ENCODE measurements at regions of chr9 and their contacts with region 1.

Region 1: DNA sequence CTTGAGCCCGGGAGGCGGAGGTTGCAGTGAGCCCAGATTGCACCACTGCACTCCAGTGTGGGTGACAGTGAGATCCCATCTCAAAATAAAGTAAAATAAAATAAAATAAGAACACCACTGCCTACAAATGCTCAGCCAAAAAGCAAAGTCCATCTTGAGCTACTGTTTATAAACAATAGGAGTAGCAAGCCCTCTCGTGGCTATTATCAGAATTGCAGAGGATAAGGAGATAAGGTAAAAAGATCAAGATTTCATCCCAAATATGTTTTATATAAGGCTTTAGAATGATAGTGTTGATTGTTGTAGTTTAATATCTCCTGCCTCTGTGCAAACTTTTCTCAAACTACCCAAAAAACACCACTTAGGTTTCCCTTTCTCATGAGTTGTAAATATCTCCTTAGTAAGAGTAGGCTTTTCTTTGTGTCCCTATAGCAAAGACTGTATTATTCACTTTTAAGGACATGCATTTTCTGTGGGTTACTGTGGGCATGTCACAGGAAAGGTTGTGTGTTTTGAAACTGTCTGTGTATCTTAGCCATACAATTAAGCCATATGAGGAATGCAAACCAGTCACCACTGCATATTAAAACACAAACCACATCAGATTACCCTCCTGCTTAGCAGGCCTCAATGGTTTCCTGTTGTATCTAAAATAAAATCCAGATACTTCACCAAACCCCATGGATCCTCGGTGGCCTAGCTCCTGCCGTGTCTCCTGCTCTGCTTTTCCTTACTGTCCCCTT is 31.8 kb upstream of the CKS2 start:
- DNase-seq: peak; percentile 75
- H3K4me3 Mint-ChIP-seq: no peak overlapping the region
- H3K27ac Mint-ChIP-seq: no peak overlapping the region
- H3K4me1 Mint-ChIP-seq: peaks cover 21% of the 10 kb centered on the region
- H3K27me3 Mint-ChIP-seq: peaks cover 7% of the 10 kb centered on the region

Region 2: DNA sequence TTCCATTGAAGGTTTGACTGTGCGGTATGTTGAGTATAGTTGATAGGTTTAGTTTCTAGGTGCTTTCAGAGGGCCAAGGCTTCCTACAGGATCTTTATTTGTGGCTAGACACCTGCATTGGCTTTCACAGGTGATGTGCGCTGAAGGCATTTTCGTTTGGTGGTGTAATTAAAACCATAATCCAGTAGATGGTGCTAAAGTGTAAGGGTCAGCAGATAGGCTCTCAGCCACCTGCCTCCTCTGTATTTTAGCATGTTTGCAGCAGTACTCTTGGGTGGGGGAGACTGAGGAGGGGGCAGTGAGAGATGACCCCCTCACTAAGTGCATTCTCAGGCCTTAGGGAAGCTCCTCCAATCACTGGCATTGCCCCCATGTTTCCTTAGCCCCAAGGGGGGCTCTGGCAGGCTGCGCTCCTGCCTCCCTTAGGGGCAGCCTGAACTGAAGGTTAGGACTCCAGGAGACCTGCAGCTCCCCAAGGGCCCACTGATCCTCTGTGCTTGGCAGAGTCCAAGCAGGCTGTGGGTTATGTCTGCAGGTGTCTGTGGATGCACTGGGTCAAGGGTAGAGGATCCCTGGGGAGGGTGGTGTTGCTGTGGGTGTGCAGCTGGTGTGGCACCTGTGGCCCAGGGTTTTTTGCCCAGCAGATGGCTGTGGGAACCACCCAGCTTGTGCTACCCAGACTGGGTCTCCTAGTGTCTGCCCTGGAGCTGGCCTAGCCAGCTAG is 1328.2 kb before region 1 on chr9:
- intact Hi-C with region 1: loop called (anchors 5 kb)
- DNase-seq: peak; percentile 68
- H3K4me3 Mint-ChIP-seq: no peak overlapping the region
- H3K27ac Mint-ChIP-seq: no peak overlapping the region
- H3K4me1 Mint-ChIP-seq: peaks cover 2% of the 10 kb centered on the region
- H3K27me3 Mint-ChIP-seq: peaks cover 25% of the 10 kb centered on the region

Region 3: DNA sequence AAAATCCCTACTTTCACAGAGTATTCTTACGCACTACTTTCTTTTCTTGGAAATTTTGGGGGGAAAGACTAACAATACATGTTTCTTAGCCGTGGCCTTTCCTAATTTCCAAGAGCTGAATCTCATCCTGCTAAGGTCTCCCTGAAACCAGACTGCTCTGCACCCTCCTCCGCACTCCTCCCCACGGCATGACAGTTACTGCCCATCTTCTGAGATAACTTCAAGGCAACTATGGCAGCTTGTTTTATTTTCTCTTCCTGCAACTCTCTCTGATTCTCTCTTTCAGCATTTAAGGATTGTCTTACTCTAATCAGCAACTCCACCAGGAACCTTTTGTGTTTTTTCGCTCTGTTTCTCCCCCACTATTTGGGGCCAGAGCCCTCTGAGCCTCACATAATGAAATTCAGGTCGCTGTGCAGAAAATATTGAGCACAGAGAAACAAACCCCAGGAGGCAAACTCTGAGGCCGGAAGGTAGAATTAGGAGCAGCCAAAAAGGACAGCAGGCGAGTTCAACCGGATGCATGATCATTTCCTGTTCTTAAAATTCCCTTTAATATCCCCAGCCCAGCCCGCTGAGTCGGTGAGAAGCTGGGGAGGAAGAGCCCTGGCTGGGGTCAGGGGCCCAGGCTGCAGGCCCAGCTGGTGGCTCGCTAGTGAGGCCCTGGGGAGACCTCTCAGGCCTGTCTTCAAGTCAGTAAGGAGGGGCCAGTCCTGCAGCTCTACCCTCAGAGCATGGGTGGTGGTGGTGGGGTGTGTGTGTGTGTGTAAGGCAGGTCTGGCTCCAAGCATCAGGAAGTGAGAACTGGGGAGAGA is 501.5 kb before region 1 on chr9:
- intact Hi-C with region 1: no loop called
- DNase-seq: peak; percentile 51
- H3K4me3 Mint-ChIP-seq: no peak overlapping the region
- H3K27ac Mint-ChIP-seq: no peak overlapping the region
- H3K4me1 Mint-ChIP-seq: no peaks in the 10 kb centered on the region
- H3K27me3 Mint-ChIP-seq: peaks cover 4% of the 10 kb centered on the region

Region 4: DNA sequence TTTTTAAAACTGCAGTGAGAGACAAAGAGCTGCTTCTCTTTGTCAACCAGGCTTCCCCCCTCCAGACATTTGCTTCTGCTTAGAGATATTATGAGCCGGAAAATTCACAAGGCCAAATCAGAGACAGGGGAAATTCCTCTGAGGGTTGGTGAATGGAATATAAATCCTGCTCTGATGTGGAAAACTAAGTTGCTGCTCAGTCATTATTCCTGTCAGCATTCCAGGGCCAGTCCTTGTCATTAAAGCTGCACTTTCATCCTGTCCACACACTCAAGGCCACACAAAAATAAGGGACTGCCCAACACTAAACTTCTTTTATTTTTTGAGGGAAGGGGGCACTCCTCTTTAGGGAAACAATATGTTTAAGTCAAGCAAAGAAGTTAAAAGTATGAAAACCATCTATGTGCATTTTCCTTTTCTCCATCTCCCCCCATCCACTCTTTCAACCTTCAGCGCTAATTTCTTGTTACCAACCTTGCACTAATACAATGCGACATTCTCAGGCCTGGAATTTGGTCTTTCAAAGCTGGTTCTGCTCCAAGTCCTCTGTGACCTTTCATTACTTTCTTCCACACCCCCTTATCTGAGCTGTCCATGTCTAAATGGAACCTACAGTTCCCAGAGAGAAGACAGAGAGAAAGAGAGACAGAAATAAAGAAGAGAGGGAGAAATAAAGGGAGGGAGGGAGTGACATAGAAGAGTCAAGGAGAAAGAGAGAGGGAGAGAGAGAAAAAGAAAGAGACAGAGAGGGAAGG is 406.8 kb before region 1 on chr9:
- intact Hi-C with region 1: no loop called
- DNase-seq: no peak
- H3K4me3 Mint-ChIP-seq: no peak overlapping the region
- H3K27ac Mint-ChIP-seq: no peak overlapping the region
- H3K4me1 Mint-ChIP-seq: no peaks in the 10 kb centered on the region
- H3K27me3 Mint-ChIP-seq: peaks cover 13% of the 10 kb centered on the region

Region 5: GRCh38 chr9:88905506-88905905 is 373.7 kb before region 1 on chr9:
- intact Hi-C with region 1: no loop called
- DNase-seq: no peak
- H3K4me3 Mint-ChIP-seq: no peak overlapping the region
- H3K27ac Mint-ChIP-seq: no peak overlapping the region
- H3K4me1 Mint-ChIP-seq: no peaks in the 10 kb centered on the region
- H3K27me3 Mint-ChIP-seq: peaks cover 19% of the 10 kb centered on the region

Region 6: DNA sequence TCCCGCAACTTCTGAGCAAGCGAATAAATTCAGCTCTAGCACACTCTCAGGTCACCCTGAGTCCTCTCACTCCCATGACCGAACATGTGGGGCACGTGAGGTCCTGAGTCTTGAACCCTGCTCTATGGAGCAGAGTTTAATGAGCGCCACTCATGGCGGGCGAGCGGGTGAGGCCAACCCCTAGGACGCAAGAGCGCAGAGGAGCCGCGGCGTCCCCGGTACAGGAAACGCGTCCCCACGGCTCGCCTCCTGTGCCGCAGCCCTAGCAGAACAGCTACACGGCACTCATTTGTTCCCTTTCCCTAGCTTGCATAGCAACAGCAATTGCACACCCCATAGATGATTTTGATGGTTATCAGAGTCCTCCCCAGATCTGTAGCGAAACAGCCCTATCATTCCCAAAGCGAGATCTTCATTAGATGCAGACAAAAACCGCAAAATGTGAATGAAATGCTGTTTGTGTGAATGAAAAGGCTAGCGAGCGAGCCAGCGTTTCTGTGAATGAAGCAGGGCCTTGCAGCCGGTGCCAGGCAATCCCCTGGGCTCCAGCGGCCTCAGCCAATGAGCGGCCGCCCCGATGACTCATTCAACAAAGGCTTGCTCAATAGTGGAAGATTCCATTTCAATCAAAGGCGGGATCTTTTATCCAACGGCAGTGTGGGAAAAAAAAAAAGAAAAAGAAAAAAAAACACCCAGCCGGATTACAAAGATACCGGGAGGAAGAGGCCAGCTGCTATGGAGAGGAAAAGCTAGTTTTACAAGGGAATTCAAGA is 99.1 kb before region 1 on chr9:
- intact Hi-C with region 1: loop called (anchors 2 kb)
- DNase-seq: peak; percentile 77
- H3K4me3 Mint-ChIP-seq: peak overlapping the region; percentile 60
- H3K27ac Mint-ChIP-seq: no peak overlapping the region
- H3K4me1 Mint-ChIP-seq: peaks cover 12% of the 10 kb centered on the region
- H3K27me3 Mint-ChIP-seq: peaks cover 57% of the 10 kb centered on the region

Region 7: DNA sequence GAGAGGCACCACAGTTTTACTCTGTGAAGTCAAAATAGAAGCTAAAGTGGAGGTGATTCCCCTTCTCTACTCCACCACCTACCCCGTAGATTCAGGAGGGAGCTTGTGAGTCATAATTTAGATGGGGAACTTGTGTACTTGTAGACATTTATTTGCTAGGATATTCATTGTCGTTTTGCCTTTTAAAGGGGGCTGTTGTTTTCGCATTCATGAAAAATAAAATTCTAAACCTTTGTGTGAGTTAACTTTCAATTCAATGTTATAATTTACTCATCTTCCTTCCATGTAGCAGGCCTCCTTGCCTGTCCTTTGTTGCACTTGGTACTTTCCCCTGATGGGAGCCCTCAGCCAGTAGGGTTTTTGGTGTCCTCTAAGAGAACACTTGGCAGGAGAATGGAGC is 61.2 kb after region 1 on chr9:
- intact Hi-C with region 1: no loop called
- DNase-seq: no peak
- H3K4me3 Mint-ChIP-seq: peak overlapping the region; percentile 20
- H3K27ac Mint-ChIP-seq: peak overlapping the region; percentile 73
- H3K4me1 Mint-ChIP-seq: peaks cover 29% of the 10 kb centered on the region
- H3K27me3 Mint-ChIP-seq: no peaks in the 10 kb centered on the region